Heart left ventricle (tissue), 16 donors: ENCODE measurements at regions of chrX and their contacts with region 1.

Region 1: DNA sequence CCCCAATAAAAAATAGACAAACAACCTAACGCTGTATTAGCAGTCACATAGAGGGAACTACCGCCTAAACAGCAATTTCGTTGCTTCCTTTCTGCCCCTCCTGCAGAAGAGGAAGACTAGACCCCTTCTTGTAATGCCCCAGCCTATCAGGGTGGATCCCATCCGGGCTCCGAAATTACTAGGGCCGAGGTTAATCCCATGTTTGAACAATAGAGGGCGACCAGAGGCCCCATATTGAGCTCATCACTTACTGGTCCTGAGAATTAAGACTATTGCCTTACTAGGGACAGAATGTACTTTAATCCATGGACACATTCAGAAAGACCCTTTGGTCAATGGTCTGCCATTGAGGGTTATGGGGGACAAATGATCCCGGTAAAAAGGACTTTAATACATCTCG is 11.8 kb upstream of the ZNF630 start:
- DNase-seq: peak in 2 of 5 donors; percentile 20 to 23
- ATAC-seq: peak; percentile 47 to 81 (median 72)
- H3K4me3 ChIP-seq: no peak overlapping the region
- H3K27ac ChIP-seq: no peak overlapping the region
- H3K4me1 ChIP-seq: no peaks in the 10 kb centered on the region
- H3K27me3 ChIP-seq: peaks cover 0 to 4% (median 0%) of the 10 kb centered on the region in 9 donors
- CTCF ChIP-seq: peak; percentile 39 to 61 (median 48)
- POLR2A ChIP-seq: no peak

Region 2: GRCh38 chrX:48493890-48494364 is 410.7 kb after region 1 on chrX:
- intact Hi-C with region 1: loop called in 7 of 10 experiments (anchors 5 to 10 kb)
- DNase-seq: no peak
- ATAC-seq: peak in 3 of 4 donors; percentile 38 to 70 (median 45)
- H3K4me3 ChIP-seq: no peak overlapping the region
- H3K27ac ChIP-seq: no peak overlapping the region
- H3K4me1 ChIP-seq: no peaks in the 10 kb centered on the region
- H3K27me3 ChIP-seq: no peaks in the 10 kb centered on the region
- CTCF ChIP-seq: peak in 7 of 12 donors; percentile 11 to 45 (median 35)
- POLR2A ChIP-seq: no peak

Region 3: GRCh38 chrX:48508400-48509244 is 425.4 kb after region 1 on chrX and contains the start of gene PORCN:
- intact Hi-C with region 1: loop called in 3 of 10 experiments (anchors 5 to 10 kb)
- DNase-seq: peak; percentile 87 to 92 (median 89)
- ATAC-seq: peak; percentile 85 to 97 (median 95)
- H3K4me3 ChIP-seq: peak within 1 kb of the TSS; percentile 31 to 97 (median 76)
- H3K27ac ChIP-seq: peak within 1 kb of the TSS in 11 of 12 donors; percentile 50 to 86 (median 79)
- H3K4me1 ChIP-seq: peaks cover 0 to 10% (median 3%) of the 10 kb centered on the region in 12 donors
- H3K27me3 ChIP-seq: no peaks in the 10 kb centered on the region
- CTCF ChIP-seq: no peak
- POLR2A ChIP-seq: peak in 1 of 2 donors; percentile 68
- total RNA-seq, gene PORCN: 9.6 to 35.7 (median 17.3) TPM